T-cell (primary cell): ENCODE measurements at regions of chrX and their contacts with region 1.

Region 1: GRCh38 chrX:154370882-154371770 is 3.3 kb downstream of the FLNA start:
- DNase-seq: peak; percentile 80 to 93 (median 88)
- ATAC-seq: peak; percentile 58 to 70 (median 68)
- H3K4me3 ChIP-seq: peak overlapping the region; percentile 76 to 89
- H3K4me3 Mint-ChIP-seq: peak overlapping the region; percentile 80 to 88 (median 83)
- H3K27ac ChIP-seq: peak overlapping the region; percentile 73
- H3K27ac Mint-ChIP-seq: peak overlapping the region; percentile 82 to 84
- H3K4me1 ChIP-seq: peaks cover 7 to 61% of the 10 kb centered on the region in 2 experiments
- H3K4me1 Mint-ChIP-seq: peaks cover 26 to 34% (median 31%) of the 10 kb centered on the region in 3 donors
- H3K27me3 ChIP-seq: no peaks in the 10 kb centered on the region
- H3K27me3 Mint-ChIP-seq: no peaks in the 10 kb centered on the region

Region 2: GRCh38 chrX:154321152-154321551 is 50.0 kb before region 1 on chrX:
- CTCF ChIA-PET with region 1: interaction called in 1 of 2 experiments, 3 read pairs
- POLR2A ChIA-PET with region 1: interaction called in 1 of 2 experiments, 11 read pairs
- DNase-seq: no peak
- ATAC-seq: peak in 3 of 4 experiments; percentile 10 to 30 (median 14)
- H3K4me3 ChIP-seq: no peak overlapping the region
- H3K4me3 Mint-ChIP-seq: no peak overlapping the region
- H3K27ac ChIP-seq: no peak overlapping the region
- H3K27ac Mint-ChIP-seq: peak overlapping the region in 1 of 2 donors; percentile 28
- H3K4me1 ChIP-seq: peaks cover 4 to 43% of the 10 kb centered on the region in 2 experiments
- H3K4me1 Mint-ChIP-seq: peaks cover 38 to 39% (median 38%) of the 10 kb centered on the region in 3 donors
- H3K27me3 ChIP-seq: no peaks in the 10 kb centered on the region
- H3K27me3 Mint-ChIP-seq: no peaks in the 10 kb centered on the region

Region 3: DNA sequence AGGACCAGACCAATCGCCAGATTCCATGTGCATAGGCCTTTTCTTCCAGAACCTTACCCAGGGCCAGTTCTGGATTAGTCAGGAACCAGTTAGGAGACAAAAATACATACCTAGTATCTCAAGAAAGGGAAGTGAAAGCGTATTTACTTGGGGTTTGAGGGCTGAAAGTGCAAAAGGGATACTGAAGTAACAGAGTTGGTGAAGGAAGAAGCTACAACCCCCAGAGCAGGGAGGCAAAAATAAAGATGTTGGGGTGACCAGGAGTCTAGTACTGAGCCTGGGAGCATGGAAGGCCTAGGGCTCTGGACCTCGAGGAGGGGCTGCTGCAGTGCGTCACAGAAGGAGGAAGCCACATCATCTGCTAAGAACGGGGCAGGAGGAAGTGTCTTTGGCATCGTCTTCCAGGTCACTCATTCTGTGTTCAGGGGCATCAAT is 37.3 kb before region 1 on chrX:
- CTCF ChIA-PET with region 1: no interaction called
- POLR2A ChIA-PET with region 1: no interaction called
- DNase-seq: no peak
- ATAC-seq: peak in 1 of 4 experiments; percentile 23
- H3K4me3 ChIP-seq: no peak overlapping the region
- H3K4me3 Mint-ChIP-seq: peak overlapping the region in 1 of 3 donors; percentile 33
- H3K27ac ChIP-seq: no peak overlapping the region
- H3K27ac Mint-ChIP-seq: peak overlapping the region; percentile 63 to 70
- H3K4me1 ChIP-seq: peaks cover 0 to 22% of the 10 kb centered on the region in 2 experiments
- H3K4me1 Mint-ChIP-seq: peaks cover 12 to 34% (median 25%) of the 10 kb centered on the region in 3 donors
- H3K27me3 ChIP-seq: no peaks in the 10 kb centered on the region
- H3K27me3 Mint-ChIP-seq: peaks cover 0 to 3% of the 10 kb centered on the region in 2 donors